ENCODE measurements at regions of chr2 and their contacts with region 1.

Region 1: GRCh38 chr2:80326214-80326613 is 21.7 kb upstream of the LRRTM1 start:
- DNase-seq: no peak
- H3K4me3 ChIP-seq: no peak overlapping the region
- H3K27ac ChIP-seq: no peak overlapping the region
- H3K4me1 ChIP-seq: peaks cover 6 to 22% (median 19%) of the 10 kb centered on the region in 4 experiments
- H3K27me3 ChIP-seq: peaks cover 6 to 16% (median 15%) of the 10 kb centered on the region in 4 experiments
- CTCF ChIP-seq: peak in 2 of 3 experiments; percentile 34 to 45; a peak in 2 of 4 replicates
- EP300 ChIP-seq: no peak
- POLR2A ChIP-seq: no peak
- RAD21 ChIP-seq: peak; percentile 77

Region 2: DNA sequence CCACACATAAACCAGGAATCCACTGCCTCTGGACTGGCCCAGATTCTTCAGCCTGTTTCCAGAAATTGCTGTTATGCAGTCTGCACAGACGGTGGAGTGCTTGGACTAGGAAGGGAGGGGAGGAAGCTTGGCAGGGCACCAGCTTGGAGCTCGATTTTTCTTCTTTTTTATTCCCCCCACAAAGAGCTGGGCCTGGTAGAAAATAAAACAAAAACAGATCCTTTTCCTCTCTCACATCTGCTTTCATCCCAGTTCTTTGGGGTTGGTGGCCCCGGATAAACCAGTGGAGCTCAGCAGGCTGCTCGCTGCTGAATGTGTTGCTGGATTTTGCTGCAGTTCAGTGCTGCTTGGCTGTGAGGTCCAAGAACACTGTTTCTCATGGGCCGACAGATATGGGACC is 37.6 kb before region 1 on chr2:
- CTCF ChIA-PET with region 1: interaction called, 10 read pairs
- POLR2A ChIA-PET with region 1: no interaction called
- DNase-seq: no peak
- H3K4me3 ChIP-seq: no peak overlapping the region
- H3K27ac ChIP-seq: no peak overlapping the region
- H3K4me1 ChIP-seq: no peaks in the 10 kb centered on the region
- H3K27me3 ChIP-seq: peaks cover 0 to 1% (median 0%) of the 10 kb centered on the region in 4 experiments; a peak in 1 of 7 replicates
- CTCF ChIP-seq: peak in 2 of 3 experiments; percentile 9 to 21; a peak in 1 of 4 replicates
- EP300 ChIP-seq: no peak
- POLR2A ChIP-seq: no peak
- RAD21 ChIP-seq: peak; percentile 46 to 59

Region 3: GRCh38 chr2:80338794-80339193 is 12.6 kb after region 1 on chr2:
- CTCF ChIA-PET with region 1: no interaction called
- POLR2A ChIA-PET with region 1: no interaction called
- DNase-seq: no peak
- H3K4me3 ChIP-seq: no peak overlapping the region
- H3K27ac ChIP-seq: no peak overlapping the region
- H3K4me1 ChIP-seq: no peaks in the 10 kb centered on the region
- H3K27me3 ChIP-seq: no peaks in the 10 kb centered on the region
- CTCF ChIP-seq: no peak
- EP300 ChIP-seq: no peak
- POLR2A ChIP-seq: no peak
- RAD21 ChIP-seq: no peak

Region 4: DNA sequence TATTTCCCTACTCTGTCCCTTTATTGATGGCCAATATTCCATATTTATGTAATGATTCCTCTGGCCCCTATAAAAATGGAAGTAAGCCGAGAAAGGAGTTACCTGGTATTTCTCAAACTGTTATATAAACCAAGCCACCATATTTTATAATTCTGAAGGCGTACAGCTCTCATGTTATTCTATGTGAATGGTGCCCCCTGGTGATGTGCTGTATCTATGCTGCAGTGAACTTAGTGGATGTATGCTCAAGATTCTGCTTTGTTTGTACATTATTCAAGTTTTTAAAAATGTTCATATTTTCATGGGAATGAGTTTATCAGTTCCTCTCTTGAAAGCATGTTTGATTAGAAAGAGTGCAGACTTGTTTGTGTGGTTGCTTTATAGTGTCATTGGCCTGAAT is 172.9 kb after region 1 on chr2:
- CTCF ChIA-PET with region 1: interaction called, 62 read pairs
- POLR2A ChIA-PET with region 1: no interaction called
- DNase-seq: no peak
- H3K4me3 ChIP-seq: no peak overlapping the region
- H3K27ac ChIP-seq: no peak overlapping the region
- H3K4me1 ChIP-seq: no peaks in the 10 kb centered on the region
- H3K27me3 ChIP-seq: no peaks in the 10 kb centered on the region
- CTCF ChIP-seq: peak in 2 of 3 experiments; percentile 21 to 45; a peak in 2 of 4 replicates
- EP300 ChIP-seq: no peak
- POLR2A ChIP-seq: no peak
- RAD21 ChIP-seq: peak; percentile 67 to 72